Activated naive CD4-positive, alpha-beta T cell treated with anti-CD3 and anti-CD28 coated beads for 36 hours (primary cell): ENCODE measurements at regions of chr1 and their contacts with region 1.

Region 1: DNA sequence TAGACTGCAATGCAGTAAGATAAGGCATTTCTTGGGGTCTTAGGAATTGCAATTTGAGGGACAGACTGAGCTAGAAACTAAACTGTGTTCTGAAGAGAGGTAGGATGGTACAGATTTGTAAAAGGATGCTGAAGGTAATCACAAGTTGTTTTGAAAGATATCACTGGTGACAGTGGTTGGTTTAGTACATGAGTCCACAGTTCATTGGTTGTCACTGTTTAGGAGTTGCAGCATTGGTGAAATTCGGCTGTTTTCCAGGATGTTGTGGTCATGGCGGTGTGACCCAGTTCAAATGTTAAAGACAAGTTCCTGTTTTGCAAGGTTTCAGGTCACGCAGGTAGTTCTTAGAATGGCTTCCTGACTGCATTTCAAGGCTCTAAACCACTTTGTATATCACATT is 292.8 kb upstream of the B3GALT2 start:
- DNase-seq: peak; percentile 83
- H3K4me3 Mint-ChIP-seq: no peak overlapping the region
- H3K27ac Mint-ChIP-seq: peak overlapping the region; percentile 68
- H3K4me1 Mint-ChIP-seq: peaks cover 47% of the 10 kb centered on the region
- H3K27me3 Mint-ChIP-seq: no peaks in the 10 kb centered on the region

Region 2: DNA sequence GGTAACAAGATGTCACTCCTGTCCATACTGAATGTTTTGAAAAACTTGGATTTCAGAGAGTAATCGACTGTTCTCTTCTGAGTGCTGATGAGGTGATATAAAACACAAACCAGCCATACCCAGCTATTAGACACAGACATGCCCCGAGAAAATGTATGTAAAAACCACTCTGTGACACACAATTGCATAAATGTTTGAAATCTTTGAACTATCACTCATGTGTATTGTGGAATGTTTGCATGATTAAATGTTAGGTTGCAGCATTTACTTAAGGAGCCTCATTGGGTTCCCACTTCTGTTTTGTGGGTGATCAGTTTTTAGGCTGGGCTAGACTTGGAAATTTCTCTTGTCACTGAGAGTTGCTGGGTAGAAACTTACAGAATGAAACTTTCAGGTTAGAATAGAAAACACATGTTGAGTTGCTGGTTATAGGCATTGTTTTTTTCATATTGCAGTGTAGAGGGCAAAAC is 22.3 kb before region 1 on chr1:
- CTCF ChIA-PET with region 1: no interaction called
- intact Hi-C with region 1: loop called (anchors 1 kb)
- DNase-seq: no peak
- H3K4me3 Mint-ChIP-seq: no peak overlapping the region
- H3K27ac Mint-ChIP-seq: no peak overlapping the region
- H3K4me1 Mint-ChIP-seq: peaks cover 23% of the 10 kb centered on the region
- H3K27me3 Mint-ChIP-seq: no peaks in the 10 kb centered on the region

Region 3: DNA sequence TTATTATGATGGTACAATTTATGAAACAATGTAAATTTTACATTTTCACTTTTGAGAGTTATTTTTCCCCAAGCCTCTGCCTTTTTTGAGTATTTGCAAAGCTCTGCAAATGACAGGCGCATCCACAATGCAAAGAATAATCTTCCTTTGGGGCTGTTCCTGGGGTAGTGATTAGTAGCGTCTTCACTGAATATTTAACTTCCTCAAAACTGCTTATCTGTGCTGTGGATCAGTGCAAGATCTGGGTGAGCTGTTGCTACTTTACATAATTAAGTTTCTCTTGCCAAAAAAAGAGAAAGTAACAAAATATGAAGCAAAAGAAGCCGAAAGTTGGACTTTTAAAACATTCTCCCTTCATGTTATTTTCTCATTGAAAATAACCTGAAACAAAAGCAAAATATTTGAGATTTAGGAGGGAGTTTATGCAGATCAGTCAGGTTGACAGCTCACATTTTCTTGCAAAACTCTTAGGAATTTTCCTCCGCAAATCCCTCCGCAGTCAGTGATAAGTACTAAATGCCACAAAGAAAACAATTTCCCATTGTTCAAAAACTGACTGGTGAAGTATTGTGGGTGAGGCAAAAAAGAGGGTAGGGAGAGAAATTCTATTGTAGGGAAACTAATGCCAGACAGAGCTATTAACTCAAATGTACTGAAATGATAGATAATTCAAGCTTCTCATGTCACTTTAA is 16.4 kb before region 1 on chr1:
- CTCF ChIA-PET with region 1: no interaction called
- intact Hi-C with region 1: loop called (anchors 1 kb)
- DNase-seq: no peak
- H3K4me3 Mint-ChIP-seq: peak overlapping the region; percentile 31
- H3K27ac Mint-ChIP-seq: no peak overlapping the region
- H3K4me1 Mint-ChIP-seq: peaks cover 42% of the 10 kb centered on the region
- H3K27me3 Mint-ChIP-seq: no peaks in the 10 kb centered on the region

Region 4: GRCh38 chr1:194289569-194290266 is 810.5 kb after region 1 on chr1:
- CTCF ChIA-PET with region 1: no interaction called
- intact Hi-C with region 1: loop called (anchors 1 kb)
- DNase-seq: peak; percentile 81
- H3K4me3 Mint-ChIP-seq: peak overlapping the region; percentile 54
- H3K27ac Mint-ChIP-seq: peak overlapping the region; percentile 59
- H3K4me1 Mint-ChIP-seq: peaks cover 25% of the 10 kb centered on the region
- H3K27me3 Mint-ChIP-seq: no peaks in the 10 kb centered on the region